Posterior vena cava (tissue), 2 donors: ENCODE measurements at regions of chr6 and their contacts with region 1.

Region 1: DNA sequence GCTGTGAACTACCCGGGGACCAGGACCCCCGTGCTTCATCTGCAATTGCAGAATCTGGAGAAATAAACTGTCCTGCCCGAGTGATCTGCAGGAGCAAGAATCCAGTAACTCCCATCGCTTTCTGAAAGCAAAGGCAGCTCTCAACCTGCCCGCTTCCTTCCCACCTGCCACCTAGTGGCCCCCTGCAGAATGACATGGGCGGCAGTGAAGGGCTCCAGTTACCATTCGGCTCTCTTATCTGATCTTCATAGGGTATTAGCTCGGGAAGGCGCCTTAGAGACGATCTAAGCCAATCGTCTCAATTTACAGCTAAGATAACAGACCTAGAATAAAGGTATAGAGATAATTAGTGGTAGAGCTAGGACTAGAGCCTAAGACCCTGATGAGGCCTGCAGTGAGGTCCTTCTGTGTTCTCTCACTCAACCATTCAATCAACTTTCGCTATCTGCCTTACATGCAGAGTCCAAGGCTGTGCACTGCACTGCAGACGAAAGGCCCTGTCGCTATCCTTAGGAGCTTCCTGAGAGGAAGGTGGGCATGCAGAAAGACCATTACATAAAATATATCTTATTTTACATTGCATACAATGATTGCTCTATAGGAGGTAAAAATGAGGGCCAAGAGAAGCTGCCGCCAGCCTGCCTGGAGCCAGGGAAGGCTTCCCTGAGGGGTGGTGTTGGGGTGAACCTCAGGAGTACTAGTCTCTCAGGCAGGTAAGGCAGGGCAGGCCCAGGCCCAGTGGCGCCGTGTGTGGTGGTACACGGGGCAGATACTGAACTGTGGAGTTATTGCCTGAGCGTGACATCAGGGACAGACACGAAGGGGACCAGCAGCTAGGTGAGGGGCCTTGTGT is 7.1 kb upstream of the PSMG4 start:
- DNase-seq: peak; percentile 93

Region 2: GRCh38 chr6:3124667-3125066 is 127.0 kb before region 1 on chr6:
- intact Hi-C with region 1: loop called (anchors 5 to 10 kb)
- DNase-seq: no peak

Region 3: GRCh38 chr6:3162565-3163247 is 89.0 kb before region 1 on chr6:
- intact Hi-C with region 1: loop called (anchors 2 to 5 kb)
- DNase-seq: peak; percentile 89

Region 4: DNA sequence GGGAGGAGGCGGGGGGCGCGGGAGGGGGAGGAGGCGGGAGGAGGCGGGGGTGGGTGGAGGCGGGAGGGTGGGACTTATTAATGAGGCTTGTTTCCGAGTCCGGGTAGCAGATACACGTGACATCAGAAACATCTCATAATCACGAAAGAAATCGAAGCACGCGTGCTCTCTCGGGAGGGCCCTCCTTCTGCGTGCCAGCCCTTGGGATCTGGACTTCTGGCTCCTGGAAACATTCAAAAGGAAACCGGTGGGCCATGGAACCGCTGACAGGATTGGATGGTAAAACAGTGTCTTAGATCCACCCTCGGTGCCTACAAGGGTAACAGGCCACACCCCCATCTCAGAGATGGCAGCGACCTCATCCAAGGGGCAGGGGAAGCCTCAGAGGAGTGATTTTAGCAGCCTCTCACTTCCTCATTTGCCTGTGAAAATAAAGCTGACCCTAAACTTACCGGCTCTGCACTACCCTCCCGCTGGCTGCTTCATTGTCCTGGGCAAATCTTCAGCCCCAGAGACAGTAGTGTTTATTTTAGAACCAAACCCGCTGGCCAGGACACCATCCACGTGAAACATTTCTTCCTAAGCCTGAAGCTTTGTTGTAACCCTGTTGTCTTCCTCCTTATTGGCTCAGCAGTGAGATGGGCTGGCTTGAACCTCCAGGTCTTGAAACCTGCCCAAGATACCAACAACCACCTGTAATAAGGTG is 104.5 kb after region 1 on chr6:
- intact Hi-C with region 1: no loop called
- DNase-seq: peak; percentile 85

Region 5: DNA sequence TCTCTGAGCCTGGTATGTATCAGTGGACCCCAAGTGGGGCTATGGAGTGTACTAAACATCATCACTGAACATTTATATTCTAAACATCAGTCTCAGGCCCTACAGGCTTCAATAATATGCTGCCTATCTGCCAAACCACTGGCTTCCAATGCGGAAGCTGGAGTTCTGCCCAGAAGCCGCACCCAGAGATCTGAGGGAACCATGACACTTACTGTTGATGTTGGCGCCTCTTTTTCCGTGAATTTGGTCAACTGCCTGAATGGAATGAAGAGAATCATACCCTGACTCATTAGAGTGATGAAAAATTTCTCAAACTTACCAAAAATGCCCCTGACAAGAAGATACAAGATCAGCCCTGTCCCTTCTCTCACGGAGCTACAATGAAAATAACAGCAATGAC is 139.0 kb after region 1 on chr6:
- intact Hi-C with region 1: no loop called
- DNase-seq: peak; percentile 95